Activated T-helper 2 cell treated with anti-CD3 and anti-CD28 coated beads, Interferon-gamma antibody, Interleukin-2, Interleukin-4, amounts not matched to agents 10 μg/mL and 5 μg/mL and 100 μg/mL, durations not matched to agents 14 hours and 24 hours and 36 hours (primary cell): ENCODE measurements at regions of chr2 and their contacts with region 1.

Region 1: GRCh38 chr2:156435715-156436496 is at the start of gene GPD2:
- DNase-seq: peak; percentile 58
- H3K4me3 Mint-ChIP-seq: peak within 1 kb of the TSS; percentile 99
- H3K27ac Mint-ChIP-seq: peak within 1 kb of the TSS; percentile 98
- H3K4me1 Mint-ChIP-seq: peaks cover 43% of the 10 kb centered on the region
- H3K27me3 Mint-ChIP-seq: no peaks in the 10 kb centered on the region
- total RNA-seq, gene GPD2: 23.6 and 23.7 TPM in 2 replicates

Region 2: GRCh38 chr2:156341452-156342253 is 94.3 kb before region 1 on chr2:
- intact Hi-C with region 1: loop called (anchors 1 kb)
- DNase-seq: peak; percentile 88
- H3K4me3 Mint-ChIP-seq: peak overlapping the region; percentile 87
- H3K27ac Mint-ChIP-seq: peak overlapping the region; percentile 94
- H3K4me1 Mint-ChIP-seq: peaks cover 48% of the 10 kb centered on the region
- H3K27me3 Mint-ChIP-seq: no peaks in the 10 kb centered on the region

Region 3: DNA sequence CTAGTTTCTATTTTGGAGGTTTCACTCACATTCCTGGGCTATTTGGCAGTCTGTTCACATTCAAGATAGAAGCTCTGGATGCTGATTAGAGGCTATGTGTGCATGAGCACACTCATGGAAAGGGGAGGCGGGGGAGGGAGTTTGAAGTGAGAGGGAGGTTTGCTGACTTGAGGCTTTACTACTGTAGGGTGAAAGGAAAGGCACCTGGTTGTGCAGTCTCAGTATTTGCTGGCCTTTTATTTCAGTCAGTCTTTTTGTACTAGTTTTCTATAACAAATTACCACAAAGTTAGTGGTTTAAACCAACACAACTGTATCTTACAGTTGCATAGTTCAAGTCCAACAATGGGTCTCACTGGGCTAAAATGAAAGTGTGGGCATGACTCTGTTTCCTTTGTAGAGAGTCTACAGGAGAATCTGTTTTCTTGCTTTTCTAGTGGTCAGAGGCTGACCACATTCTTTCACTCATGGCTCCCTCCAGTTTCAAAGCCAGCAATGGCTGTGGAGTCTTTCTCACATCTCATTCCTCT is 55.7 kb before region 1 on chr2:
- intact Hi-C with region 1: loop called (anchors 10 kb)
- DNase-seq: no peak
- H3K4me3 Mint-ChIP-seq: no peak overlapping the region
- H3K27ac Mint-ChIP-seq: peak overlapping the region; percentile 43
- H3K4me1 Mint-ChIP-seq: peaks cover 43% of the 10 kb centered on the region
- H3K27me3 Mint-ChIP-seq: no peaks in the 10 kb centered on the region

Region 4: GRCh38 chr2:156476850-156477206 is 40.9 kb after region 1 on chr2:
- intact Hi-C with region 1: loop called (anchors 2 kb)
- DNase-seq: no peak
- H3K4me3 Mint-ChIP-seq: no peak overlapping the region
- H3K27ac Mint-ChIP-seq: peak overlapping the region; percentile 66
- H3K4me1 Mint-ChIP-seq: peaks cover 53% of the 10 kb centered on the region
- H3K27me3 Mint-ChIP-seq: no peaks in the 10 kb centered on the region

Region 5: GRCh38 chr2:156490466-156490840 is 54.5 kb after region 1 on chr2:
- intact Hi-C with region 1: loop called (anchors 5 kb)
- DNase-seq: no peak
- H3K4me3 Mint-ChIP-seq: no peak overlapping the region
- H3K27ac Mint-ChIP-seq: peak overlapping the region; percentile 28
- H3K4me1 Mint-ChIP-seq: peaks cover 45% of the 10 kb centered on the region
- H3K27me3 Mint-ChIP-seq: no peaks in the 10 kb centered on the region

Region 6: GRCh38 chr2:156517419-156517818 is 81.5 kb after region 1 on chr2:
- intact Hi-C with region 1: no loop called
- DNase-seq: no peak
- H3K4me3 Mint-ChIP-seq: no peak overlapping the region
- H3K27ac Mint-ChIP-seq: no peak overlapping the region
- H3K4me1 Mint-ChIP-seq: peaks cover 2% of the 10 kb centered on the region
- H3K27me3 Mint-ChIP-seq: no peaks in the 10 kb centered on the region

Region 7: DNA sequence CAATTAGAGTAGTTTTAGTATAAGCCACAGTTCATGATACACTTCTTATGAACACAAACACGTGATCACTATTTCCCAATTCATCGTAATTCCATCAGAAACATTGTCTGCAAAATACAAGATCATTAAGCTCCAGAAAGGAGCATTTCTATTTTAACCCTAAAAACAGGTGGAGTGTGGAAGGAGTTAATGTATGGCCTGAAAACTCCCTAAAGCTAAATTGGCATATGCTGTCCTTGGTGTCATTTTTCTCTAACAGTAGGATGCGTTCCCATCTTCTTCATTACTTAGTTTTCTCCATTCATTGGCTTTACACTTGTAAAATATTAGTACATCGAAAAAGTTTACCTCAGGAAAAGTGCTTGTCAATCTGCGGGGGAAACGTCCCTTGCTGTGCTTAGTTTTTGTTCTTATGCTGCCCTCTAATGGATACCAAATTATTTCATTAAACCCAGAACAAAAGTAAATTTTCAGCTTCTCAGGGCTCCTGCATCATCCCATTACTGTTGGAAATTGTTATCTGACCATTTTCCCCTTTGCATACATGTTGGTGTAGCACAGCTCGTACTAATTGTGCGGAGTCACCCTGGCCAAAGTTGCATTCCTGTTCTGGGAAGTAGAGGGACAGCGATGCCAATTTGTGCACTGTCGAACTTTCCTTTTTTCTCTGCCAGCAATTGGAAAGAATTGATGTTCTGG is 153.6 kb after region 1 on chr2:
- intact Hi-C with region 1: loop called (anchors 5 kb)
- DNase-seq: no peak
- H3K4me3 Mint-ChIP-seq: no peak overlapping the region
- H3K27ac Mint-ChIP-seq: no peak overlapping the region
- H3K4me1 Mint-ChIP-seq: peaks cover 11% of the 10 kb centered on the region
- H3K27me3 Mint-ChIP-seq: no peaks in the 10 kb centered on the region

Region 8: DNA sequence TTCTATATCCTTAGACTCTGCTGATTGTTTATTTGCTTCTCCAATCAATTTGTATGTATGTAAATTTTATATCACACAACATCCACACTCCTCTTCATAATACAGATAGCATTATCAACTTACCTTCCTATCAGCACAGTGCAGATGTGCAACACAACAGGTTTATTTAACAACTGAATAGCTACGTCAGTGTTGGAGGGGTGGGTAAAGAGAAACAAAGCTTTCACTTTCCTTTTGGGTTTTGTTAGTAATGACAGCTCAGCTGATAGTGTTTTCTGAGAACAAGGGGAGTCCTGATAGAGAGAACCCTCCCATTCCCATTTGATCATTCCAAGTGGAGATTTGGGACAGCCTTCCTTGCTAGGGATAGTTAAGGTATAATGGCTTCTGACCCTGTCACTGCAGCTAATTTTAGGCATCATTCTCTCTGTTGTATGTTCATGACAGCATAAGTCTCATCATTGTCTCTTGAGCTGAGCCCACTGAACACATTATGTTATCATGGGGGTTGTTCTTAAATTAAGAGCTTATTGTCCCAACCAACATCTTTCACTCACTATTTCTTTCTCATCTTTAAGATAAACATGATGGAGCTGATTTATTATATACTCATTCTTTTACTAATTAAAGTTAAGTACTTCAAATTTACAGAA is 228.0 kb after region 1 on chr2:
- intact Hi-C with region 1: no loop called
- DNase-seq: no peak
- H3K4me3 Mint-ChIP-seq: no peak overlapping the region
- H3K27ac Mint-ChIP-seq: no peak overlapping the region
- H3K4me1 Mint-ChIP-seq: peaks cover 8% of the 10 kb centered on the region
- H3K27me3 Mint-ChIP-seq: peaks cover 3% of the 10 kb centered on the region